AG04450 (cell line): ENCODE measurements at regions of chr3 and their contacts with region 1.

Region 1: DNA sequence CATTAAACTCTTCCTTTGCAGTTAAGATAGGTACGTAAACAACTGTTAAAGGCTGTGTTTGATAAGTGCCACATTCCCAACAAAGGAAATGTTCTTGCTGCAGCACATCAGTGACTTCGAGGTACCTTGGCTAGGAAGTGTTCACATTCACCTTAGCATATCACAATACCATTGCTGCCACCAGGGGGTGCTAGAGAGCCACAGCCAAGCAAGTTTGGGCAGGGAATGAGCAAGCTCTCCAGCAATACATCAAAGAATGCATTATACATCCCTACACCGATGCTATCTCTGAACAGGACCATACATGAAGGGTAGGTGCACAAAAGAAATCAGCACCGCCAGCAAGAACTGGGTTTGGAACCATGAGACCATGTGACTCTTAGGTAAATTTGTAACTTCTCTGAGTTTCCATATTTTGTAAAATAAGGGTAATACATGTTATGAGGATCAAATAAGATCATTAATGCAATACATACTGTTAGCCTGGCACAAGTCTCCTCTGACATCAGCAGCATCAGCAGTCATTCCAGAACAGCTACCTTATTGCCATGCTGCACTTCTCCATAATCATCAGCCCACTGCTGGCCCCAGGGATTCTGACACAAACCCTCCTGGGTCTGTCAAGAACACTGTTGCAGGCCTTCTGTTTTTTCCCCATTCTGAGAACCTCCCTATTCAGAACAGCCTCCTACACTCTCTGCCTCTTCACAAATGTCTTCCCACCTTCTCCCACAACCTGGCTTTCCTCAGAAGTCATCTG is 37.6 kb downstream of the RYK start:
- DNase-seq: no peak
- H3K4me3 ChIP-seq: no peak overlapping the region
- H3K27ac ChIP-seq: no peak overlapping the region
- H3K27me3 ChIP-seq: no peaks in the 10 kb centered on the region
- CTCF ChIP-seq: peak; percentile 99

Region 2: GRCh38 chr3:133821767-133822638 is 391.1 kb before region 1 on chr3:
- CTCF ChIA-PET with region 1: interaction called, 48 read pairs
- POLR2A ChIA-PET with region 1: no interaction called
- DNase-seq: peak; percentile 33
- H3K4me3 ChIP-seq: no peak overlapping the region
- H3K27ac ChIP-seq: no peak overlapping the region
- H3K27me3 ChIP-seq: no peaks in the 10 kb centered on the region
- CTCF ChIP-seq: peak; percentile 45

Region 3: GRCh38 chr3:134090031-134090430 is 123.1 kb before region 1 on chr3:
- CTCF ChIA-PET with region 1: no interaction called
- POLR2A ChIA-PET with region 1: no interaction called
- DNase-seq: peak; percentile 27
- H3K4me3 ChIP-seq: no peak overlapping the region
- H3K27ac ChIP-seq: no peak overlapping the region
- H3K27me3 ChIP-seq: no peaks in the 10 kb centered on the region
- CTCF ChIP-seq: no peak

Region 4: GRCh38 chr3:134180761-134181160 is 32.3 kb before region 1 on chr3:
- CTCF ChIA-PET with region 1: interaction called, 16 read pairs
- POLR2A ChIA-PET with region 1: interaction called, 3 read pairs
- DNase-seq: no peak
- H3K4me3 ChIP-seq: no peak overlapping the region
- H3K27ac ChIP-seq: no peak overlapping the region
- H3K27me3 ChIP-seq: no peaks in the 10 kb centered on the region
- CTCF ChIP-seq: no peak

Region 5: DNA sequence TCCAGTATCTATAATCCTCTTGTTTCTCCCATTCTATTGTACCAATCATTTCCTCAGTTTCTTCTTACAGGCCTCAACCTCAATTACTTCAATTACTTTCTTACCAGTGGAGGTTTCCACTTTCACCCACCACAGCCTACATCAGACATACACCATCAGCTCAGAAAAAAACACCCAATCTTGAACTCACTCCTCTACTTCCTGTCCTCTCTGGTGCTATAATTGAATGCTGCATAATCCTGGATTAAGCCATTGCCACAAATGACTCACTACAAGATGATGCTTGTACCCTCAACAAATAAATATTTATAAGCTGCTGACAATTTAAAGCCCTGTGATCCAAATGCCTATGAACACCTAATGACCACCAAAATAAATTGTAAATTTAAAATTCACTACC is 19.1 kb after region 1 on chr3:
- CTCF ChIA-PET with region 1: interaction called, 90 read pairs
- POLR2A ChIA-PET with region 1: no interaction called
- DNase-seq: no peak
- H3K4me3 ChIP-seq: no peak overlapping the region
- H3K27ac ChIP-seq: no peak overlapping the region
- H3K27me3 ChIP-seq: no peaks in the 10 kb centered on the region
- CTCF ChIP-seq: no peak

Region 6: GRCh38 chr3:134277066-134277660 is 64.1 kb after region 1 on chr3:
- CTCF ChIA-PET with region 1: interaction called, 11 read pairs
- POLR2A ChIA-PET with region 1: no interaction called
- DNase-seq: no peak
- H3K4me3 ChIP-seq: no peak overlapping the region
- H3K27ac ChIP-seq: no peak overlapping the region
- H3K27me3 ChIP-seq: peaks cover 7% of the 10 kb centered on the region
- CTCF ChIP-seq: no peak

Region 7: DNA sequence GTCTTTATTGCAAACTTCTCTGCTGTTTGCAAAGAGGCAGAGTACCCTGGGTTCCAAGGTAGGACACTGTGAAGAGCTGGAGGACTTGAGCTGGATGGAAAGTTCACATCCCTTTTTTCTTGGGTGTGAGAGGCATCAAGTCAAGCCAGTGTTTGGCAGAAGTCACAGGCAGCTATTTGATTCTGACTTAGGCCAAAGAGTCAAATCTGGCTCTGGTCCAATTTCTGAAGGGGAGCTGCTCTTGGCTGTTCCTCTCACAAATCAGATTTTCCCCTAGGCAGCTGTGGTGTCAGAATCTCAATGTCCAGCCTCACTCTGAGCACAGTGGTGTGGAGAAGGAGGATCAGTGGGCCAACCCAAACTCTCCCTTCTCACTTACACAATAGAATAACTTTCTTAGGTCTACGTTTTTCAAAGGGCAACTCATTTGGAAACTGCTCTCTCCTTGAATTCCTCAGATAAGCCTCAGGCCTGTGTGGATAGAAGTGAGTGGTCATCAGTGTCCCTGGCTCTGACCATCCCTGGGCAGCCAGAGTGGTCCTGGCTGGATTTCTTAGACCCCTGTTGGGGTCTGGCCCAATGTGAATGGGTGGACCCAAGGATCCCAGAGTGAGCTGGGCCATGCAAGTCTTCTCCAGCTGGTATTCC is 179.4 kb after region 1 on chr3:
- CTCF ChIA-PET with region 1: no interaction called
- POLR2A ChIA-PET with region 1: no interaction called
- DNase-seq: no peak
- H3K4me3 ChIP-seq: no peak overlapping the region
- H3K27ac ChIP-seq: no peak overlapping the region
- H3K27me3 ChIP-seq: peaks cover 5% of the 10 kb centered on the region
- CTCF ChIP-seq: no peak

Region 8: DNA sequence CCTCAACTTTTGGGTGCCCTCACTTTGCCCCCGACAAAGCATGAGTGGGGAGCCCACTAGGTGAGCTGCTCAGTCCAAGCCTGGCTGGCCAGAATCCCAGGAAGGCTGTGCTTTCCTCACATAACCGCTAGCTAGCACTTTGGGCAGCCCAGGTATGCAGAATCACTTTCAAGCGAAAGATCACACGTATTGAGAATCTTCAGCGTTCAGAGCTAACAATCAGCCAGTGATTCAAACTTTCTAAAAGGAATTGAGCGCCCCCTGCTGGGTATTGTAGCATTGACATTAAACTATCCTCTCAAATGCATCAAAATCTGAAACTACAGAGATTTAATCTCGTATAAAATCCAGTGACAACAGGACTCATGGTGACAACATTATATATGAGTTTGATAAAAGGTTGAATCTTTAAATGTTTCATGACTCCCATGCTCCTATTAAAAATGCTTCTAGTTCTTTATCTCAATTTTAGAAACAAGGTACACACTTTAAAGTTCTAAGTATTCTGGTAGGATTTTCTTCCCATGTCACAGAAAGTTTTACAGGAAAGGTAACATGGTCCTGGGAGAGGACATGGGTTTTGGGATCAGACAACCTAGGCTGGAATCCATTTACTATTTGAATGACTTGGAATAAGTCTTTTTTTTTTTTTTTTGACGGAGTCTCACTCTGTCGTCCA is 260.9 kb after region 1 on chr3:
- CTCF ChIA-PET with region 1: interaction called, 142 read pairs
- POLR2A ChIA-PET with region 1: no interaction called
- DNase-seq: peak; percentile 66
- H3K4me3 ChIP-seq: no peak overlapping the region
- H3K27ac ChIP-seq: no peak overlapping the region
- H3K27me3 ChIP-seq: no peaks in the 10 kb centered on the region
- CTCF ChIP-seq: peak; percentile 72

Region 9: DNA sequence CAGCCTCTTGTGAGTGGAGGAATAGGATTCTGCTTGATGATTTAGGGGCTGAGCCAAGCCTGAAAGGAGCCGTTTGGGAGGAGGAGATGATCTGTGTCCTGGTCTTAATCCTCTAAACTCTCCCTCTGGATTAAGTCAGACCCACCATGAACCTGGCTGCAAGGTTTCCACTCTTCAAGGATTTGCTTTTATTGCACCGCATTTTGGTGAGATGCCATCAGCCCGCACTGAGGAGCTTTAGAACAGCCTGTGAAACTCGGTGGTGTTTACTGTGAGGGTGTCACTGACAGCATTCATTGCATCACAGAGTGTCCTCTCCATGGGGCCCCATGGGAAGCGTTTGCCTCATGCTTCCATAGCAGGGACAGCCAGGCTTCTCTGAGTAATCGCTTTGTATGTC is 641.2 kb after region 1 on chr3:
- CTCF ChIA-PET with region 1: no interaction called
- POLR2A ChIA-PET with region 1: no interaction called
- DNase-seq: no peak
- H3K4me3 ChIP-seq: no peak overlapping the region
- H3K27ac ChIP-seq: no peak overlapping the region
- H3K27me3 ChIP-seq: peaks cover 3% of the 10 kb centered on the region
- CTCF ChIP-seq: no peak

Region 10: GRCh38 chr3:135000465-135000864 is 787.4 kb after region 1 on chr3:
- CTCF ChIA-PET with region 1: no interaction called
- POLR2A ChIA-PET with region 1: no interaction called
- DNase-seq: no peak
- H3K4me3 ChIP-seq: no peak overlapping the region
- H3K27ac ChIP-seq: no peak overlapping the region
- H3K27me3 ChIP-seq: no peaks in the 10 kb centered on the region
- CTCF ChIP-seq: no peak